Caco-2 (cell line): ENCODE measurements at regions of chr5 and their contacts with region 1.

Region 1: DNA sequence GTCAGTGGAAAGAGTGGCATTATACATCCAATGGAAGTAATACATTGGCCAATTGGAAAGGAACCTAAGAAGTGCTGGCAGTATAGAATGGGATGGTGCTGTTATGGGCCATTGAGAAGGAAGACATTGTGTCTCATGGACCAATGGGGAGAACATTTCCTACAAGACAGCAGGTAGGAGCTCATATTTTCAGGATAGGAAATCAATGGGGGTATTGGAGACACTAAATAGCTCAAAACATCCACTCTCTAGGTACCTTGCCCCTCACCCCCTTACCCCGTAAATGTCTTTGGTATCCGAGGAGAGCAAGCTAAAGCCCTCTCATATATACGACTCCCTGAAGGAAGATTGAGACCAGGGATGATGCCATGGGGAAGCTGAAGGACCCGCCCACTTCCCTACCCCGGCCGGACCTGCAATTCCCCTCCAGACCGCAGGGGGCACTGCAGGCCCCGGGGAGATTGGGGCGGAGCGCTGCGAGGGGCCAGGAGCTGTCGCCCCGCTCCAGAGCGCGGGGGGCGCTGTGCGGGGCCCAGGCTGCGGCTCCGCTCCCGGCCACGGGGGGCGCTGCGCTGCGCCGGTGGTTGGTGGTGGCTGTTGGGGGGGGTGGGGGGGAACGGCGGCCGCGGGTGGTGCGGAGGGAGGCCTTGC is at the start of gene KDM3B:
- DNase-seq: peak; percentile 82 to 98
- H3K4me3 ChIP-seq: peak within 1 kb of the TSS; percentile 78
- H3K4me3 Mint-ChIP-seq: peak within 1 kb of the TSS; percentile 91
- H3K27ac Mint-ChIP-seq: peak within 1 kb of the TSS; percentile 92
- H3K4me1 ChIP-seq: peaks cover 12% of the 10 kb centered on the region; the same call in 1 of the 2 replicates
- H3K4me1 Mint-ChIP-seq: peaks cover 17% of the 10 kb centered on the region
- H3K27me3 ChIP-seq: no peaks in the 10 kb centered on the region
- H3K27me3 Mint-ChIP-seq: no peaks in the 10 kb centered on the region
- CTCF ChIP-seq: peak; percentile 98 to 99
- total RNA-seq, gene KDM3B: 71.8 and 77.9 TPM in 2 replicates

Region 2: GRCh38 chr5:138213161-138214029 is 138.8 kb before region 1 on chr5 and contains the start of gene CDC23:
- CTCF ChIA-PET with region 1: interaction called, 11 read pairs
- POLR2A ChIA-PET with region 1: interaction called, 5 read pairs
- intact Hi-C with region 1: no loop called
- DNase-seq: peak; percentile 96 to 97
- H3K4me3 ChIP-seq: peak within 1 kb of the TSS; percentile 99
- H3K4me3 Mint-ChIP-seq: peak within 1 kb of the TSS; percentile 99
- H3K27ac Mint-ChIP-seq: peak within 1 kb of the TSS; percentile 99
- H3K4me1 ChIP-seq: no peaks in the 10 kb centered on the region
- H3K4me1 Mint-ChIP-seq: no peaks in the 10 kb centered on the region
- H3K27me3 ChIP-seq: no peaks in the 10 kb centered on the region
- H3K27me3 Mint-ChIP-seq: no peaks in the 10 kb centered on the region
- CTCF ChIP-seq: no peak
- total RNA-seq, gene CDC23: 52.9 and 60.7 TPM in 2 replicates

Region 3: DNA sequence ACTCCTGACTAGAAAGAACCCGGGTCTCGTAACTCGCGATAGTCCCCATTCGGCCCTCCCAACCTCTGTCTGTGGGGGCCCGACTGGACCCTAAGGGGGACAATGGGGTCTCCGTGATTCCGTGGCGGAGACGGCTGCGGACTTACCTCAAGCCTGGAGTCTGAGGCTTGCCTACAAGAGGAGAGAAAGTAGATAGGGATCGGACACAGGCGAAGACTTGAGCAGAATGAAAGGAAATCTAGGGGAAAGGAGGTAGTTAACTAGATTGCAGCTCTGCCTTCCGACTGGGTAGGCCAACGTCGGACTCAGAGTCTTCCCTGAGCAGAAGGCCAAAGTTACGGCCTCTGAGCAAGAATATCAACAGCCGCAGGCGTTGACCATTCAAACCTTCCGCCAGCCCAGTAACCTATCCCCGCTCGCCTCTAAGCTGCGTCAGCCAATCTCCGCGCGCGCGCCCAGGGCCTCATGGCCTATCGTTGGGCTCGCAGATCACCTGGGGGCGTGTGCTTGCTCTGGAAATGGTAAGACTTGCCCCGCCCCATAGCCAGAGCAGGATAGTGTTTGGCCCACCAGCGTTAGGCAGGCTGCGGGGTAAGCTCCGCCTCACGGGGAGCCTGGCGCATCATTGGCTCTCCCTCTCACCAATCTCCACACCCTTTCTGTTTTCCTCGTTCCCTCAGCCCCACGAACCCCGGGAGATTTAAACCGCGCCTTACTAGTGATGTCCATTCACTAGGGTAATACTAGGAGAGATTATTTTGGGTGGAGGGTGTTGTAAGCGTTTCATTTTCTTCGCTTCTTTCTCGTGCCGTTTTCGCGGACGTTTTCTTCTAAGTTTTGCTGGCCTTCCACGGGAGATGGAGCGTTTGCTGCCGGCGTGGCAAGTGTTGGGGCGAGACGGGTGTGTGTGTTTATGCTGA is 20.5 kb before region 1 on chr5 and contains the start of gene CDC25C:
- CTCF ChIA-PET with region 1: interaction called, 44 read pairs
- POLR2A ChIA-PET with region 1: interaction called, 26 read pairs
- intact Hi-C with region 1: no loop called
- DNase-seq: peak; percentile 98 to 99
- H3K4me3 ChIP-seq: peak within 1 kb of the TSS; percentile 69
- H3K4me3 Mint-ChIP-seq: peak within 1 kb of the TSS; percentile 95
- H3K27ac Mint-ChIP-seq: peak within 1 kb of the TSS; percentile 82
- H3K4me1 ChIP-seq: no peaks in the 10 kb centered on the region
- H3K4me1 Mint-ChIP-seq: peaks cover under 1% of the 10 kb centered on the region
- H3K27me3 ChIP-seq: no peaks in the 10 kb centered on the region
- H3K27me3 Mint-ChIP-seq: no peaks in the 10 kb centered on the region
- CTCF ChIP-seq: no peak
- total RNA-seq, gene CDC25C: 22.7 and 22.9 TPM in 2 replicates

Region 4: GRCh38 chr5:138337685-138338410 is 14.3 kb before region 1 on chr5 and contains the start of gene FAM53C:
- CTCF ChIA-PET with region 1: interaction called, 54 read pairs
- POLR2A ChIA-PET with region 1: interaction called, 34 read pairs
- intact Hi-C with region 1: no loop called
- DNase-seq: peak; percentile 92 to 98
- H3K4me3 ChIP-seq: peak within 1 kb of the TSS; percentile 87
- H3K4me3 Mint-ChIP-seq: peak within 1 kb of the TSS; percentile 90
- H3K27ac Mint-ChIP-seq: peak within 1 kb of the TSS; percentile 100
- H3K4me1 ChIP-seq: peaks cover 19% of the 10 kb centered on the region
- H3K4me1 Mint-ChIP-seq: peaks cover 16% of the 10 kb centered on the region
- H3K27me3 ChIP-seq: no peaks in the 10 kb centered on the region
- H3K27me3 Mint-ChIP-seq: no peaks in the 10 kb centered on the region
- CTCF ChIP-seq: no peak
- total RNA-seq, gene FAM53C: 32.6 and 33.3 TPM in 2 replicates

Region 5: DNA sequence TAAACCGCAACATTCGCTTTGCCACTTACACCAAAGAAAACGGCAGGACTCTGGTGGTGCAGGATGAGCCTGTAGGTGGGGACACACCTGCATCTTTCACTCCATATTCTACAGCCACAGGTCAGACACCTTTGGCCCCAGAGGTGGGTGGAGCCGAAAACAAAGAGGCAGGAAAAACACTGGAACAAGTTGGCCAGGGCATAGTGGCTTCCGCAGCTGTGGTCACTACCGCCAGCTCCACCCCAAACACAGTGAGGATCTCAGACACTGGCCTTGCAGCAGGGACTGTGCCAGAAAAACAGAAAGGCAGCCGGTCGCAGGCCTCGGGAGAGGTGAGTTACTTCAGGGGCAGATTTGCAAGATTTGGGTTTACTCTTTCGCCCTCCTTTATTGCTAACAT is 34.1 kb after region 1 on chr5:
- CTCF ChIA-PET with region 1: interaction called, 11 read pairs
- POLR2A ChIA-PET with region 1: no interaction called
- intact Hi-C with region 1: no loop called
- DNase-seq: peak in 1 of 2 experiments; percentile 21
- H3K4me3 ChIP-seq: no peak overlapping the region
- H3K4me3 Mint-ChIP-seq: no peak overlapping the region
- H3K27ac Mint-ChIP-seq: no peak overlapping the region
- H3K4me1 ChIP-seq: no peaks in the 10 kb centered on the region
- H3K4me1 Mint-ChIP-seq: no peaks in the 10 kb centered on the region
- H3K27me3 ChIP-seq: no peaks in the 10 kb centered on the region
- H3K27me3 Mint-ChIP-seq: no peaks in the 10 kb centered on the region
- CTCF ChIP-seq: no peak